GM12878 (cell line): ENCODE measurements at regions of chr15 and their contacts with region 1.

Region 1: DNA sequence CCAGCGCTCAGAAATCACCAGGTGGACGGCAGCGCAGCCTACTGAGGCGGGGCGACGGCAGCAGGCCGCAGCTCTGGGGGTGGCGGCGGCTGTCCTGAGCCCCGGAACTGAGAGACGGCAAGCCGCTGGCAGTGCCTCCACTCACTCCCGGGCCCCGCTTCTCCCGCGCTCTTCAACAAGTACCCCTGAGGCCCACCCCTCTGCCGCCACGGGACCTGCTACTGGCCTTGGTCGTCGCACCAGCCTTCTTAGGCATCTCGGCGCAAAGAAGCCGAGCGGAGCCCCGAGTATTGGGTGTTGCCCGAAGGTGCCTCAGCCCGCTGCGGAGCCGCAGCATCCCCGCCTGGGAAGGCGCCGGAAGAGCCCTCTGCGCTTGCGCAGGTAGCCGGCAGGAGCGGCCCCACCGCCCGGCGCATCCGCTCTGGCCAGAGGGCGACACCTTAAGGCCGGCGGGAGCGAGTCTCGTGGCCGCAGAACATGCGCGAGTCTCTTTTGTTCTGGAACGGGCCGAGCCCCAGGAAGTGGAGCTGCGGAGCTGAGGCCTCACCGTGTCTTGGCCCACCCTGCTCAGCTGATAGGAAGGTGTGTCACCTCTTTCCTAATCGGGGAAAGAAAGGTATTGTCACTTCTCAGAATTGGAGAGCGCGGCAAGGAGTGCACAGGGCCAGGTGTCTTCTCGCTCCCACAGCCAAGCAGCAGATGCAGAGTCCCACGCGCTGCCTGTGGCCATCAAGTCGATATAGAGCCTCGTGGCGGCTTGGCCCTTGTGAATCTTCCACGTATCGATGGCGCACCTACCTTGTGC is at the start of gene C15orf40:
- DNase-seq: peak; percentile 71
- ATAC-seq: peak; percentile 93
- H3K4me3 ChIP-seq: peak within 1 kb of the TSS; percentile 78
- H3K27ac ChIP-seq: peak within 1 kb of the TSS; percentile 72
- H3K4me1 ChIP-seq: peaks cover 6% of the 10 kb centered on the region; the same call in 1 of the 2 replicates
- H3K27me3 ChIP-seq: no peaks in the 10 kb centered on the region
- CTCF ChIP-seq: peak; percentile 76 to 94 (median 79)
- EP300 ChIP-seq: peak in 1 of 2 experiments; percentile 51; a peak in 1 of 4 replicates
- POLR2A ChIP-seq: peak; percentile 95
- RAD21 ChIP-seq: peak; percentile 21; the same call in 1 of the 2 replicates
- polyA plus RNA-seq, gene C15orf40: 59.9 to 70.0 TPM

Region 2: GRCh38 chr15:82999905-83000671 is 11.4 kb before region 1 on chr15:
- CTCF ChIA-PET with region 1: interaction called, 28 read pairs
- POLR2A ChIA-PET with region 1: no interaction called
- RAD21 ChIA-PET with region 1: interaction called, 7 read pairs
- SMC1A ChIA-PET with region 1: interaction called, 4 read pairs
- in situ Hi-C with region 1: no loop called
- intact Hi-C with region 1: no loop called
- DNase-seq: peak; percentile 43
- ATAC-seq: peak; percentile 97
- H3K4me3 ChIP-seq: peak overlapping the region; percentile 59; the same call in 1 of the 2 replicates
- H3K27ac ChIP-seq: no peak overlapping the region
- H3K4me1 ChIP-seq: no peaks in the 10 kb centered on the region; the same call in 1 of the 2 replicates
- H3K27me3 ChIP-seq: no peaks in the 10 kb centered on the region
- CTCF ChIP-seq: peak; percentile 47 to 75 (median 59); a peak in 5 of 6 replicates
- EP300 ChIP-seq: no peak
- POLR2A ChIP-seq: no peak
- RAD21 ChIP-seq: peak; percentile 88

Region 3: GRCh38 chr15:83066734-83067637 is 55.5 kb after region 1 on chr15 and contains the start of gene BTBD1:
- CTCF ChIA-PET with region 1: interaction called, 9 read pairs
- POLR2A ChIA-PET with region 1: interaction called, 10 read pairs
- RAD21 ChIA-PET with region 1: interaction called, 3 read pairs
- SMC1A ChIA-PET with region 1: interaction called, 7 read pairs
- in situ Hi-C with region 1: no loop called
- intact Hi-C with region 1: loop called (anchors 5 kb)
- DNase-seq: peak; percentile 60
- ATAC-seq: peak; percentile 88
- H3K4me3 ChIP-seq: peak within 1 kb of the TSS; percentile 96
- H3K27ac ChIP-seq: peak within 1 kb of the TSS; percentile 93
- H3K4me1 ChIP-seq: peaks cover 21% of the 10 kb centered on the region
- H3K27me3 ChIP-seq: no peaks in the 10 kb centered on the region
- CTCF ChIP-seq: 0 out of 6 replicates have a peak, but pooled peaks of 2 of the 3 experiments have one; percentile 1 to 9
- EP300 ChIP-seq: no peak
- POLR2A ChIP-seq: peak; percentile 97
- RAD21 ChIP-seq: 0 out of 2 replicates have a peak, but pooled peaks have one; percentile 4
- polyA plus RNA-seq, gene BTBD1: 17.5 to 38.9 TPM

Region 4: GRCh38 chr15:83178869-83179325 is 167.4 kb after region 1 on chr15:
- CTCF ChIA-PET with region 1: no interaction called
- POLR2A ChIA-PET with region 1: no interaction called
- RAD21 ChIA-PET with region 1: no interaction called
- SMC1A ChIA-PET with region 1: no interaction called
- in situ Hi-C with region 1: no loop called
- intact Hi-C with region 1: no loop called
- DNase-seq: no peak
- ATAC-seq: peak; percentile 67
- H3K4me3 ChIP-seq: no peak overlapping the region
- H3K27ac ChIP-seq: no peak overlapping the region
- H3K4me1 ChIP-seq: peaks cover 27% of the 10 kb centered on the region
- H3K27me3 ChIP-seq: no peaks in the 10 kb centered on the region
- CTCF ChIP-seq: no peak
- EP300 ChIP-seq: no peak
- POLR2A ChIP-seq: no peak
- RAD21 ChIP-seq: no peak

Region 5: DNA sequence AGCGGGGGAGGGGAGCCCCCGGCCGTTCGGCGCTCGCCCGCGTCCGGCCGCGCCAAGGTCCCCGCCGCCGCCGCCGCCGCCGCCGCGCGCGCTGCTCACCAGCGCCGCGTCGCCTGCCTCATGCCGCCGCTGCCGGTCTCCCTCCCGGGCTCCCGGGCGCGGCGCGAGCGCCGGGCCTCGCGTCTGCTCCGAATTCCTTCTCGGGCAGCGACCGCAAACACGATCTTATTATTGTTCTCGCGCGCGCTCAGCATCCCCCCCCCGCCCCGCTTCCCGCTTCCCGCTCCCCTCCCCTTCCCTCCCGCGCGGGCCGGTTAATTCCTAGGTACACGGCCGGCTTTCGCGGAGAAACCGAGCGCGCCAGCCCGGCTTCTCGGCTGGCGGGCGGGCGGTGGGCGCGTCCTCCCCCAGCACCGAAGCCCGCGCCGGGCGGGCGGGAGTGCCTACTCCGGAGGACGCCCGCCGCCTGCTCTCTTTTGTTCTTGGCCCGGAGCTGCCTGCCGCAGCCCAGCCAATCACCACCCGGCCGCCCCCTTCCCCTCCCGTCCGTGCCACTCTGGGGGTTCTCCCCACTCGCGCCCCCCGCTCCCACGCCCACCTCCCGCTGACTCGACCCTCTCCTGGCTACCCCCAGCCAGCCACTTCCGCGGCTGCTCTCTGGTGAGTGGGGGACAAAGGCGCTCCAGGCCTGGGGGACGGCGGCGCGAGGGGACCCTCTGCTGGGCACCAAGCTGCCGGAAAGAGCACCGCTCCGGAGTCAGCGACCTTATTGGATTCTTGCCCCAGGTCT is 196.3 kb after region 1 on chr15 and contains the start of gene HDGFL3:
- CTCF ChIA-PET with region 1: interaction called, 22 read pairs
- POLR2A ChIA-PET with region 1: no interaction called
- RAD21 ChIA-PET with region 1: interaction called, 4 read pairs
- SMC1A ChIA-PET with region 1: interaction called, 8 read pairs
- in situ Hi-C with region 1: loop called (anchors 5 kb)
- intact Hi-C with region 1: loop called (anchors 1 kb)
- DNase-seq: no peak
- ATAC-seq: peak; percentile 64
- H3K4me3 ChIP-seq: peak within 1 kb of the TSS; percentile 94
- H3K27ac ChIP-seq: peak within 1 kb of the TSS; percentile 80
- H3K4me1 ChIP-seq: peaks cover 6% of the 10 kb centered on the region; the same call in 1 of the 2 replicates
- H3K27me3 ChIP-seq: no peaks in the 10 kb centered on the region
- CTCF ChIP-seq: peak; percentile 44 to 49 (median 46); a peak in 5 of 6 replicates
- EP300 ChIP-seq: no peak
- POLR2A ChIP-seq: peak; percentile 79
- RAD21 ChIP-seq: peak; percentile 53
- polyA plus RNA-seq, gene HDGFL3: 5.6 to 6.6 TPM